HEK293 (cell line): ENCODE measurements at regions of chr5 and their contacts with region 1.

Region 1: GRCh38 chr5:141557681-141558136 is 61.1 kb downstream of the DIAPH1 start:
- H3K4me3 ChIP-seq: no peak overlapping the region
- H3K27ac ChIP-seq: no peak overlapping the region
- H3K4me1 ChIP-seq: no peaks in the 10 kb centered on the region
- CTCF ChIP-seq: peak; percentile 49

Region 2: DNA sequence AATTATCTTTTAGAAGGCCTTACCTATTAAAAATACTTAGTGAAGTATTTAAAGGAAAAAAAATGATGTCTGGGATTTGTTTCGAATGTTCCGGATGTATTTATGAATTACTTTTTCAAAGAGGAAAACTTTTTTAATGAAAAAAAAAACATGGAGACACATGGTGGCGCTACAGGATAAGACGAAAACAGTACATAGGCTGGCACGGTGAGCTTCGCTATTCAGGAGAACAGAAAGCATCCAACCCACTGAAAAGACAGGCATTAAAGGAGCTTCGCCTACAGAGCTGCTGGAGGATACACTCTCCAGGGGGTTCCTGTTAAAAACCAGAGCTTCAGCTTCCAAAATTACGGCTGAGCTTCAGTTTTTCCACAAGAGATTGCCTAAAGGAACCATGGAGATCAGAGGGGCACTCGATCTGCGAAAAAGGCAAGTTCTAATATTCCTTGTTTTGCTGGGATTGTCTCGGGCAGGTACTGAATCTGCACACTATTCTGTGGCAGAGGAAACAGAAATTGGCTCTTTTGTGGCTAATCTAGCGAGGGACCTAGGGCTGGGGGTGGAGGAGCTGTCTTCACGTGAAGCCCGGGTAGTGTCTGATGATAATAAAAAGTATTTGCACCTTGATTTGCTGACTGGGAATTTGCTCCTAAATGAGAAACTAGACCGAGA is 334.5 kb before region 1 on chr5 and contains the start of gene PCDHB14:
- CTCF ChIA-PET with region 1: interaction called, 20 read pairs
- POLR2A ChIA-PET with region 1: no interaction called
- H3K4me3 ChIP-seq: peak within 1 kb of the TSS; percentile 4
- H3K27ac ChIP-seq: no peak within 1 kb of the TSS
- H3K4me1 ChIP-seq: no peaks in the 10 kb centered on the region; the same call in 1 of the 2 replicates
- CTCF ChIP-seq: no peak

Region 3: GRCh38 chr5:141320225-141321169 is 237.2 kb before region 1 on chr5 and contains the start of gene TAF7:
- CTCF ChIA-PET with region 1: interaction called, 10 read pairs
- POLR2A ChIA-PET with region 1: no interaction called
- H3K4me3 ChIP-seq: peak within 1 kb of the TSS; percentile 66
- H3K27ac ChIP-seq: peak within 1 kb of the TSS; percentile 61
- H3K4me1 ChIP-seq: no peaks in the 10 kb centered on the region
- CTCF ChIP-seq: peak; percentile 77

Region 4: GRCh38 chr5:141369994-141370848 is 187.5 kb before region 1 on chr5 and contains the start of gene PCDHGB3:
- CTCF ChIA-PET with region 1: interaction called, 14 read pairs
- POLR2A ChIA-PET with region 1: no interaction called
- H3K4me3 ChIP-seq: no peak within 1 kb of the TSS
- H3K27ac ChIP-seq: no peak within 1 kb of the TSS
- H3K4me1 ChIP-seq: no peaks in the 10 kb centered on the region
- CTCF ChIP-seq: no peak

Region 5: DNA sequence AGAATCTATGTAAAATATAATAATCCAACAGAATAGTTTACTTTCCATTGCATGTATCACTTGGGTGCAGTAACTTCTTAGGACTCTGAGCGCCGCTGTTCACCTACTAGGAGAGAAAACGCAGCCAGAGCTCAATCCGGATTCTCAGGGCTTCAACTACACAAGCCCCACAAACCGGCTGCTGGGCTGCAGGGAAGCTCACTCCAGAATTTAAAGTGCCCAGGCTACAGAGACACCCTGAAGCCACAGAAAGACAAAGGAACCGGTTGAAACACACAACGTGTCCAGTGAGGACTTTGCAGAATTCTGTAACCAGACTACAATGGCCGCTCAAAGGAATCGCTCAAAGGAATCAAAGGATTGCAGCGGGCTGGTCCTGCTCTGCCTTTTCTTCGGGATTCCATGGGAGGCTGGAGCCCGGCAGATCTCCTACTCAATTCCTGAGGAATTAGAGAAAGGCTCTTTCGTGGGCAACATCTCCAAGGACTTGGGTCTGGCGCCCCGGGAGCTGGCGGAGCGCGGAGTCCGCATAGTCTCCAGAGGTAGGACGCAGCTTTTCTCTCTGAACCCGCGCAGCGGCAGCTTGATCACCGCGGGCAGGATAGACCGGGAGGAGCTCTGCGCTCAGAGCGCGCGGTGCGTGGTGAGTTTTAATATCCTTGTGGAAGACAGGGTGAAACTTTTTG is 144.7 kb before region 1 on chr5 and contains the start of gene PCDHGA10:
- CTCF ChIA-PET with region 1: interaction called, 116 read pairs
- POLR2A ChIA-PET with region 1: no interaction called
- H3K4me3 ChIP-seq: no peak within 1 kb of the TSS
- H3K27ac ChIP-seq: no peak within 1 kb of the TSS
- H3K4me1 ChIP-seq: no peaks in the 10 kb centered on the region
- CTCF ChIP-seq: no peak

Region 6: DNA sequence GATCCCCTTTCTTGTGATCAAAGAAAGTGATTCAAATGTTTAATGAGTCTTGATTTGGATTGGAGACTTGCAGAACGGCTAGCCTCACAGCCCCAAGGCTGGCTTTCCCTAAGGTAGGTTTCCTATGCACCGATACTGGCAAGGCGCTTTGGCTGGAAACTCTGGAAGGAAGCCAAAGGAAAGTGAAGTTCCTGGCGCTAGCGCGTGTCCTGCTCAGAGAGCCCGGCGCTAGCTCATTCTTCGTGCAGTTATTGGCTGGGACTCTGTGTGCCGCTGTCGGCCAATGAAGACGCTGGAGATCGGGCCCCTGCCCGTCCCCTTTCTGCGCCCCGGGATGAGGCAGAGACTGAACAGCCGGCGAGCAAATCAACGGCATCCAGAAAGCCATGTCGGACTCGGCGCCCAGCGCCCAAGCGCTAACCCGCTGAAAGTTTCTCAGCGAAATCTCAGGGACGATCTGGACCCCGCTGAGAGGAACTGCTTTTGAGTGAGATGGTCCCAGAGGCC is 82.0 kb before region 1 on chr5 and contains the start of gene PCDHGC3:
- CTCF ChIA-PET with region 1: interaction called, 13 read pairs
- POLR2A ChIA-PET with region 1: interaction called, 3 read pairs
- H3K4me3 ChIP-seq: peak within 1 kb of the TSS; percentile 44
- H3K27ac ChIP-seq: peak within 1 kb of the TSS; percentile 43; the same call in 1 of the 2 replicates
- H3K4me1 ChIP-seq: 0 out of 2 replicates have a peak, but pooled peaks cover 4% of the 10 kb centered on the region
- CTCF ChIP-seq: peak; percentile 59

Region 7: GRCh38 chr5:141547488-141547887 is 10.2 kb before region 1 on chr5:
- CTCF ChIA-PET with region 1: interaction called, 18 read pairs
- POLR2A ChIA-PET with region 1: no interaction called
- H3K4me3 ChIP-seq: no peak overlapping the region
- H3K27ac ChIP-seq: no peak overlapping the region
- H3K4me1 ChIP-seq: no peaks in the 10 kb centered on the region
- CTCF ChIP-seq: no peak

Region 8: GRCh38 chr5:141805874-141806595 is 248.3 kb after region 1 on chr5:
- CTCF ChIA-PET with region 1: no interaction called
- POLR2A ChIA-PET with region 1: no interaction called
- H3K4me3 ChIP-seq: no peak overlapping the region
- H3K27ac ChIP-seq: no peak overlapping the region
- H3K4me1 ChIP-seq: no peaks in the 10 kb centered on the region
- CTCF ChIP-seq: no peak